ENCODE measurements at regions of chr20 and their contacts with region 1.

Region 1: DNA sequence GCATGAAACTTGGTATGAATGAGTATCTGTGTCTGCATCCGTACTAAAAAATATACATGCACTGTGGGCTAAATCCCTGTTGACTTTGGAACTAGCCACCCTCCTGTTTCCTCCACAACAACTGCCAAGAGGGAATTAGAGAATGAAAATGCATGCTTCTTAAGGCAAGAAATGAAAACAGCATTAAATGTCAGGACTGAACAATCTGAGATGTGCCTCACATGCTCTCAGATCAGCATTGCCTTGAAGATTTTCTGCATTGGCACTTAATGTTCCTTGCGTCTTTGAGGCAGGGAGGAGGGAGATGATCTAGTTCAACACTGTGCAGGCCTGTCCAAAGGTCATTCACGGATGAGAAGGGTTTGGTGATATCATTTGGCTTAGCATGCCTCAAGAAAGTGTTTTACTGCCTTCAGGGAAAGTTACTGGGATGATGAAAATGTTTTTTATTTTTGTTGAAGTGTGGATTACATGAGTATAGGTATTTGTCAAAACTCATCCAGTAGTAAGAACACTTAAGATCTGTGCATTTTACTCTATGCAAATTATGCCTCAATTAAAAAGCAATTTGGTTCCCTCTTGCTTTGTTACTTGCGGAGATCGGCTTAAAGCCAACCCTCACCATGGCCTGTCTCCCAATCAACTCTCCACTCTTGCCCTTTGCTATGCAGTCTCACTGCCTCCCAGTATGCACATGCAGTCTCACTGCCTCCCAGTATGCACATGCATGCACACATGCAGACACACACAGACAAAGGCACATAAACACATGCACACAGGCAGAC is 47.5 kb upstream of the RIN2 start:
- DNase-seq: no peak
- H3K4me3 ChIP-seq: no peak overlapping the region
- H3K27ac ChIP-seq: no peak overlapping the region
- H3K4me1 ChIP-seq: peaks cover 4% of the 10 kb centered on the region
- H3K27me3 ChIP-seq: no peaks in the 10 kb centered on the region
- CTCF ChIP-seq: no peak
- POLR2A ChIP-seq: no peak

Region 2: DNA sequence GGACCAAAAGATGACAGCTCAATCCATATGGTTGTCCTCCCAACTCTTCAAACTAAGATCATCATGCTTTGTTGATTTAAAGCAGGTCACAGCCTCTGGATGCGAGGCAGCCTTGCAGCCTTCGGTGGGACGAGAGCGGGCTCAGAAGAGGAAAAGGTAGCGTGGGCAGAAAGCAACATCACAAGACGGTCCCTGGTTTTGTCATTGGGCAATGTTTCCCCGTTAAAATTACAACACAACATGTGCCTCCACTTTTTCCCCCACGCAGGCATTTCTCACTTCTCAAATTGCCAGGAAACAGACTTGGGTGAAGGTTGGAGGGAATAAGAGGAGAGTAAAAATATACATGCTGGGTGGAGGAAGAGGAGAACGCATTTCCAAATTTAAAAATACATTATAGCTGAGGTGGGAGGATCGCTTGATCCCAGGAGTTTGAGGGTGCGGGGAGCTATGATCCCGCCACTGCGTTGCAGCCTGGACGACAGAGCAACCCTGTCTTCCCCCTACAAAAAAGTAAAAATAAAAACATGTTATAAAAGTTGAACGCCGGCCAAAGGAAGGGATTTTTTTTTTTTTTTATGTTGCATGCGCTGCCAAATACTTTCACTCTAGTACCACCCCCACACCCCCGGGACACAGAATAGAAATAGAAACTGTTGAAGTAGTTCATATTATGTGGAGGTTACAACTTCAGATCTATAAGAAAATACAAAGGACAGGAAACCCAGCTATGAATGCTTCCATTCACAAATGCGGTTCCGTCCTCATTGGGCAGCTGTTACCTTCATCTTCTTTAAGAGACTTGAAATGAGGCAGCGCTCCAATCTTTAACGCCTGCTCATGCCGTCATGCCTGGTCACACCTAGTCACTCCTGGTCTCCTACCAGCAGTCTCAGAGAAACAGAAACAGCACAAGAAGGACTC is 292.8 kb after region 1 on chr20:
- intact Hi-C with region 1: loop called (anchors 5 kb)
- DNase-seq: peak; percentile 24
- H3K4me3 ChIP-seq: no peak overlapping the region
- H3K27ac ChIP-seq: peak overlapping the region; percentile 48 to 55
- H3K4me1 ChIP-seq: peaks cover 6% of the 10 kb centered on the region
- H3K27me3 ChIP-seq: no peaks in the 10 kb centered on the region
- CTCF ChIP-seq: no peak
- POLR2A ChIP-seq: no peak

Measured in prostate gland (tissue), 2 donors.